Aorta (tissue), 5 donors: ENCODE measurements at regions of chr7 and their contacts with region 1.

Region 1: DNA sequence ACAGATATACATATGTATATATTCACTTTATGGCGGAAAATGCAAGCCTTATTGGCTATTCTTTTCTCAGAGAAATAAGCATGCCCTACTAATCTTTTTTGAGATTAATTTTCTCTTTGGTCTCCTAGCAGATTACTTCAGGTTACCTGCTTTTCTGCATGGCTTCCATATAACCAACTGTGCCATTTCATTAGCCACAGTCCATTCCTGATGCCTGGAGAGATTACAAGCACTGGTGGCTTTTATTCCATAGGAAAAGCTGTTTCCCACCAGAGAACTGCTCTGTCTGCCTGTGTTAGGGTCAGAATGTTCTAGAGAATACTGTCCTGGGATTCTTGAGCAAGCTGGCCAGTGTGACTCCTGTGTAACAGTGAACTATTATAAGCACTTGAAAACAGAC is 59.8 kb downstream of the LRRN3 start:
- DNase-seq: no peak
- ATAC-seq: no peak
- H3K4me3 ChIP-seq: no peak overlapping the region
- H3K27ac ChIP-seq: no peak overlapping the region
- H3K4me1 ChIP-seq: no peaks in the 10 kb centered on the region
- H3K27me3 ChIP-seq: no peaks in the 10 kb centered on the region

Region 2: GRCh38 chr7:111059833-111060232 is 90.9 kb before region 1 on chr7:
- intact Hi-C with region 1: no loop called
- DNase-seq: no peak
- ATAC-seq: no peak
- H3K4me3 ChIP-seq: no peak overlapping the region
- H3K27ac ChIP-seq: no peak overlapping the region
- H3K4me1 ChIP-seq: no peaks in the 10 kb centered on the region
- H3K27me3 ChIP-seq: no peaks in the 10 kb centered on the region

Region 3: GRCh38 chr7:111486472-111487142 is 335.9 kb after region 1 on chr7:
- intact Hi-C with region 1: loop called in 1 of 2 experiments (anchors 5 kb)
- DNase-seq: no peak
- ATAC-seq: no peak
- H3K4me3 ChIP-seq: no peak overlapping the region
- H3K27ac ChIP-seq: no peak overlapping the region
- H3K4me1 ChIP-seq: no peaks in the 10 kb centered on the region
- H3K27me3 ChIP-seq: no peaks in the 10 kb centered on the region